Activated CD4-positive, alpha-beta T cell treated with anti-CD3 and anti-CD28 coated beads, Interleukin-2, amount 10 ng/mL, durations not matched to agents 7 days and 5 days (primary cell): ENCODE measurements at regions of chr19 and their contacts with region 1.

Region 1: DNA sequence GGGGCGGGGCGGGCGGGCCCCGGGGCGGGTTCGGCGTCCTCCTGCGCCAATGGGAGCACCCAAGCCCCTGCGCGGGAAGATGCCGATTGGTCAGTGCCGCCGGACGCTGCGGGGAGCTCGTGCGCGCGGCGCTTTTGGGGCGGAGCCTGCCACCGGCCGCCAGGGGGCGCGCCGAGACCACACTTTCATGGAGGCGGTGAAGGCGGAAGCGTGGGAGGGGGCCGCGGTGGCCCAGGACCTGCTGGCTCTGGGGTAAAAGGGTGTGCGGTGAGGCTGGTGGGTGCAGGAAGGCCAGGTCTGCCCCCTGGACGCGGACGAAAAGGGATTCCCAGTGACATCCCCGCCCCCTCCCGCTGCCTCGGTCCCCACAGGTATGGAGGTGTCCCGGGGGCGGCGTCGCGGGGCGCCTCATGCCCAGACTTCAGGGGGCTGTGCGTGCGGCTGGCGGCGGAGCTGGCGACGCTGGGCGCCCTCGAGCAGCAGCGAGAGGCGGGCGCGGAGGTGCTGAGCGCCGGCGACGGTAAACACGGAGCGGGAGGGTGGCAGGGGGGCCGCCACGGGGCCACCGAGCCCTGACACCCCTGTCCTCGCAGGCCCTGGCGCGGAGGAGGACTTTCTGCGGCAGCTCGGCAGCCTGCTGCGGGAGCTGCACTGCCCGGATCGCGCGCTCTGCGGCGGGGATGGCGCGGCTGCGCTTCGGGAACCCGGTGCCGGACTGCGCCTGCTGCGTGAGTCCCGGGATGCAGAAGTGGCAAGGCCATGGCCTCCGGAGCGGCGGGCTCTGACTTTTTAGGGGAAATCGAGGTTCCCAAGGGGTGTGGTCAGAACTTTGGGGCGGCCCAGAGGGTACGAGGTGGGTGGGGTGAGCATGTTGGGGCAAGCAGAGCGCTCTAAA is at the start of gene FAM98C:
- DNase-seq: peak; percentile 97
- H3K4me3 Mint-ChIP-seq: peak within 1 kb of the TSS; percentile 88
- H3K27ac Mint-ChIP-seq: peak within 1 kb of the TSS; percentile 96
- H3K4me1 Mint-ChIP-seq: peaks cover 27% of the 10 kb centered on the region
- H3K27me3 Mint-ChIP-seq: no peaks in the 10 kb centered on the region
- total RNA-seq, gene FAM98C: 27.5 to 37.2 TPM

Region 2: DNA sequence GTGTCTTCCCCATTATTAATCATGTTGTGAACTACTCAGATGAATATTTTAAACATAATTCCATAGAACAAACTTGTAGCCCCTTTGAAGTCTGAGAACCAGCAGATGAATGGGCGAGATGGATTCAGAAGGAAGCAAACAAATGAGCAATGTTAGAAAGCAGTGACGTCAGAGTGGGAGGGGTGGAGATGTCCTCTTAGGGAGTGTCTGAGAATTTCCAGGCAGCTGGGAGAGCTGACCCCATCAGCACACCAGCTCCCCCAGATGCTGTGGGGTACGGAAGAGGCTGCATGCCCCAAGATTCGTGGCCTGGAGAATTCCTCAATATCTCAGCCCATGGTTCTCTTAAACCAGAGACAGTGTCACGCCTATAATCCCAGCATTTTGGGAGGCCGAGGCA is 247.8 kb before region 1 on chr19:
- CTCF ChIA-PET with region 1: no interaction called
- POLR2A ChIA-PET with region 1: no interaction called
- DNase-seq: no peak
- H3K4me3 Mint-ChIP-seq: no peak overlapping the region
- H3K27ac Mint-ChIP-seq: no peak overlapping the region
- H3K4me1 Mint-ChIP-seq: no peaks in the 10 kb centered on the region
- H3K27me3 Mint-ChIP-seq: no peaks in the 10 kb centered on the region

Region 3: DNA sequence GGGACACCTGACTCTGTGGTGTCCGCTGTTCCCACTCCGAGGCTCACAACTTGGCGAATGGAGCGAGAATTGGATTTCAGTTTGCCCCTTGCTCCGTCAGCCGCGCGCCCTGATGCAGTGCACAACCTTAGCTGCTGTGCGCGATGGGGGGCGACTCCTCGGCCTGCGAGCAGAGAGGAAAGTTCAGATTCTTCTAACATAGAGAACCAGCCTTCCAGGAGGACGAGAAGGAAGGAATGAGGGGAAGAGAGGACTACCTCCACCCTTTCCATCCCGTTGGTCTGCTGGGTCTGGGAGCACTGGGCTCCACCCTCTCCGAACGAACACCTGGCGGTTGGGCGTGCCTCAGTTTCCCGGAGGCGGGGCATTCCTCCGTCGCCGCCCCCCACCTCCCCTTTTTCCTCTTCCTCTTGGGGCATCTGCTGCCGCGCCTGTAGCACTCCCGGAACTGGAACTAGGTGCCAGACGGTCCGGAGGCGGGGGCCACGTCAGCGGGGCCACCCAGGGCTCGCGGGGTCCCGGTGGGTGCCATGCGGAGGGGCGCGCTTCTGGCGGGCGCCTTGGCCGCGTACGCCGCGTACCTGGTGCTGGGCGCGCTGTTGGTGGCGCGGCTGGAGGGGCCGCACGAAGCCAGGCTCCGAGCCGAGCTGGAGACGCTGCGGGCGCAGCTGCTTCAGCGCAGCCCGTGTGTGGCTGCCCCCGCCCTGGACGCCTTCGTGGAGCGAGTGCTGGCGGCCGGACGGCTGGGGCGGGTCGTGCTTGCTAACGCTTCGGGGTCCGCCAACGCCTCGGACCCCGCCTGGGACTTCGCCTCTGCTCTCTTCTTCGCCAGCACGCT is 83.6 kb before region 1 on chr19 and contains the start of gene KCNK6:
- CTCF ChIA-PET with region 1: interaction called, 10 read pairs
- POLR2A ChIA-PET with region 1: no interaction called
- DNase-seq: peak; percentile 55
- H3K4me3 Mint-ChIP-seq: peak within 1 kb of the TSS; percentile 82
- H3K27ac Mint-ChIP-seq: peak within 1 kb of the TSS; percentile 75
- H3K4me1 Mint-ChIP-seq: peaks cover 55% of the 10 kb centered on the region
- H3K27me3 Mint-ChIP-seq: no peaks in the 10 kb centered on the region
- total RNA-seq, gene KCNK6: 12.6 to 14.0 TPM

Region 4: DNA sequence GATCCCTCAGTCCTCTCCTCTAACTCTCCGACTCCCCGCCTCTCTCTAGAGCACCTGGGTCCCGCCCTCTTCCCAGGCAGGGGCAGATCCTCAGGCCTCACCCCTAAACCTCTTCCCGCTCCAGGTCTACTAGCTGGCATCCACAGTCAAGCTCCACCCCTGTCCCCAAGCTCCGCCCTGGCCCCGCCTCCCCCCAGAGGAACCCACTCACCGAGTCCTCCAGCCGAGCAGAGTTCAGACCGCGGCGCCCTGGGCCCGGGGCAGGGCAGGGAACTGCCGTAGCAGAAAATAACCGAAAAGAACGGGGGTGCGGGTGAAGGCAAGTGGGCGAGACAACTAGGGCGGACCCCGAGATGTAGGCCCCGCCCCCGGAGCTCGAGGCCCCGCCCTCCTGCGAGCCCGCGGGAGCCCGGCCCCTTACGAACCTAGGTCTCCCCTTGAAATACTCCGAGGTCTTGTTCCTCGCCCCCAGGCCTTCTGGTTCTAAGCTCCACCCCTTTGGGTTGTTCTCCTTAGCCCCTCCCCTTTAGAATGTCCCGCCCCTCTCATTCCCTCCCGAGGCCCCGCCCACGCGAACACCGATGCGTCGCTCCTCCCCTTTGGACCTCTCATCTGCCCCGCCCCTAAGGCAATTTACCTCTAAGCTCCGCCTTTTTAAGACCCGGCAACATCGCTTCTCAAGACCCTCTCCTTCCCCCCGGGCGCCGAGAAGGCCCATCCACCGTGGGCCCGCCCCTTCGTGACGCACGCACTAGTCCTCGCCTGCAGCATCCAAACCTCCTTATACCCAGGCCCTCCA is 15.5 kb before region 1 on chr19 and contains the start of gene GGN:
- CTCF ChIA-PET with region 1: interaction called, 40 read pairs
- POLR2A ChIA-PET with region 1: no interaction called
- DNase-seq: peak; percentile 77
- H3K4me3 Mint-ChIP-seq: peak within 1 kb of the TSS; percentile 76
- H3K27ac Mint-ChIP-seq: peak within 1 kb of the TSS; percentile 68
- H3K4me1 Mint-ChIP-seq: peaks cover 14% of the 10 kb centered on the region
- H3K27me3 Mint-ChIP-seq: peaks cover 32% of the 10 kb centered on the region
- total RNA-seq, gene GGN: not detected

Region 5: DNA sequence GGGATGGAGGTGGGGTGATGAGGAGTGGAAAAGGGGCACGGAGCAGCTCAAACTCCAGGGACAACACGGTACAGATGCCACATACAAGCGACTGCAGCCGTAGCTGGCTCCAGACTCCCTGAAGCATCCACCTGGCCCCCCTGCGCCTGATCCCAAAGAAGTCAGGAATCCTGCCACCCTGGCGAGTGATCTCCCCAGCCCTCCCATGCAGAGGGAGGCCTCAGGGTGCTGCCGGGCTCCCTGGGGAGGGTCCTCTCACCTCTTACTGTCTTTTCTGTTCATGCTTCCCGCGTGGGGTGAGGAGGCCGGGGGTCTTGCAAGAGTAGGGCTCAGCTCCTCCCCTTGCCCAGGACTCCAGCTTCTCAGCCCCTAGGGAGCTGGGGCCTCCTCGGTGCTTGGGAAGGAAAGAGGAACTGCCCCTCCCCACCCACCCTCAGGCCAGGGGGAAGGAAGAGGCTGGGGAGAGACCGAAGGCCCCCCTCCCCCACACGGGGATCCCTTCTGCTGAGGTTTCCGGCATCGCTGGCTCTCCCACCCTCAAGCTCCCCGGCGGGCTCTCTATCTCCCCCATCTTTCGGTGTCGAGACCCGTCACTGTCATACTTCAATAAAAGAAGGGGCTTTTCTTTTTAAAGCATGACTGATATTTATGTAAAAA is 22.7 kb after region 1 on chr19 and contains the start of gene RASGRP4:
- CTCF ChIA-PET with region 1: interaction called, 27 read pairs
- POLR2A ChIA-PET with region 1: no interaction called
- DNase-seq: peak; percentile 38
- H3K4me3 Mint-ChIP-seq: peak within 1 kb of the TSS; percentile 52
- H3K27ac Mint-ChIP-seq: peak within 1 kb of the TSS; percentile 81
- H3K4me1 Mint-ChIP-seq: peaks cover 32% of the 10 kb centered on the region
- H3K27me3 Mint-ChIP-seq: no peaks in the 10 kb centered on the region
- total RNA-seq, gene RASGRP4: 2.6 to 3.8 TPM

Region 6: GRCh38 chr19:38514812-38515633 is 111.8 kb after region 1 on chr19:
- CTCF ChIA-PET with region 1: interaction called, 10 read pairs
- POLR2A ChIA-PET with region 1: interaction called, 3 read pairs
- DNase-seq: peak; percentile 81
- H3K4me3 Mint-ChIP-seq: no peak overlapping the region
- H3K27ac Mint-ChIP-seq: peak overlapping the region; percentile 77
- H3K4me1 Mint-ChIP-seq: peaks cover 41% of the 10 kb centered on the region
- H3K27me3 Mint-ChIP-seq: peaks cover 6% of the 10 kb centered on the region

Region 7: GRCh38 chr19:38647368-38647965 is 244.3 kb after region 1 on chr19 and contains the start of gene ACTN4:
- CTCF ChIA-PET with region 1: interaction called, 10 read pairs
- POLR2A ChIA-PET with region 1: no interaction called
- DNase-seq: peak; percentile 99
- H3K4me3 Mint-ChIP-seq: peak within 1 kb of the TSS; percentile 95
- H3K27ac Mint-ChIP-seq: peak within 1 kb of the TSS; percentile 86
- H3K4me1 Mint-ChIP-seq: peaks cover 50% of the 10 kb centered on the region
- H3K27me3 Mint-ChIP-seq: no peaks in the 10 kb centered on the region
- total RNA-seq, gene ACTN4: 337 to 354 TPM